ENCODE measurements at regions of chr1 and their contacts with region 1.

Region 1: GRCh38 chr1:153946622-153947241 is at the start of gene DENND4B:
- DNase-seq: peak; percentile 88
- ATAC-seq: peak; percentile 83 to 89
- total RNA-seq, gene DENND4B: 41.5 to 49.5 TPM

Region 2: GRCh38 chr1:153796791-153797659 is 149.7 kb before region 1 on chr1:
- intact Hi-C with region 1: loop called in 1 of 2 experiments (anchors 10 kb)
- DNase-seq: peak; percentile 82
- ATAC-seq: peak; percentile 58 to 64

Measured in left cardiac atrium (tissue), 4 donors.